SK-N-SH (cell line): ENCODE measurements at regions of chr17 and their contacts with region 1.

Region 1: GRCh38 chr17:29640413-29640812 is 17.7 kb upstream of the CORO6 start:
- DNase-seq: no peak
- H3K4me3 ChIP-seq: no peak overlapping the region
- H3K27ac ChIP-seq: peak overlapping the region; percentile 52 to 89
- H3K4me1 ChIP-seq: peaks cover 54% of the 10 kb centered on the region in 2 experiments; a peak in 3 of 4 replicates
- H3K27me3 ChIP-seq: no peaks in the 10 kb centered on the region
- CTCF ChIP-seq: no peak
- EP300 ChIP-seq: no peak
- RAD21 ChIP-seq: no peak

Region 2: GRCh38 chr17:29622337-29623282 is 17.8 kb before region 1 on chr17 and contains the start of gene CORO6:
- CTCF ChIA-PET with region 1: interaction called, 12 read pairs
- POLR2A ChIA-PET with region 1: no interaction called
- DNase-seq: peak; percentile 95
- H3K4me3 ChIP-seq: peak within 1 kb of the TSS; percentile 75 to 86
- H3K27ac ChIP-seq: peak within 1 kb of the TSS in 1 of 2 experiments; percentile 87; a peak in 2 of 4 replicates
- H3K4me1 ChIP-seq: peaks cover 20 to 77% of the 10 kb centered on the region in 2 experiments
- H3K27me3 ChIP-seq: no peaks in the 10 kb centered on the region
- CTCF ChIP-seq: no peak
- EP300 ChIP-seq: no peak
- RAD21 ChIP-seq: no peak
- polyA plus RNA-seq, gene CORO6: 18.4 and 28.1 TPM in 2 replicates

Region 3: DNA sequence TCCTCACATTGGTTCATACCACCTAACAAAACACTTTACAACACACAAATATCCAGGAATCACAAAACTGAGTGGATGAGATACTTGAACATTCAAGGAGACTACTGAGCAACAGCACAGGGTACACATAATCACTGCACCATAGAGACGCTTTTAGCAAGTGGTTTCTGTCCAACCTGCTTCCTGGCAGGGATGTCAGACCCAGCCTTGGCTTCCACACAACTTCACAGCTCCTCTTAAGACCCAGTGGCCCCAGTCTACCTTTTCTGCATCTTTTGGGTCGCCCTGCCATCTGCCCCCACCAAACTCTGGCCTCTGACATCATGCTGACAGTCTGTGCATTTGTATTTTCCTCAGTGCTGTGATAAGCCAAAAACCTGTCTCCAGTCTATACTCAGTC is 11.8 kb before region 1 on chr17:
- CTCF ChIA-PET with region 1: interaction called, 12 read pairs
- POLR2A ChIA-PET with region 1: interaction called, 3 read pairs
- DNase-seq: no peak
- H3K4me3 ChIP-seq: no peak overlapping the region
- H3K27ac ChIP-seq: peak overlapping the region in 1 of 2 experiments; percentile 88; a peak in 2 of 4 replicates
- H3K4me1 ChIP-seq: peaks cover 0 to 73% of the 10 kb centered on the region in 2 experiments; a peak in 2 of 4 replicates
- H3K27me3 ChIP-seq: no peaks in the 10 kb centered on the region
- CTCF ChIP-seq: no peak
- EP300 ChIP-seq: no peak
- RAD21 ChIP-seq: no peak